MCF 10A (cell line): ENCODE measurements at regions of chr7 and their contacts with region 1.

Region 1: DNA sequence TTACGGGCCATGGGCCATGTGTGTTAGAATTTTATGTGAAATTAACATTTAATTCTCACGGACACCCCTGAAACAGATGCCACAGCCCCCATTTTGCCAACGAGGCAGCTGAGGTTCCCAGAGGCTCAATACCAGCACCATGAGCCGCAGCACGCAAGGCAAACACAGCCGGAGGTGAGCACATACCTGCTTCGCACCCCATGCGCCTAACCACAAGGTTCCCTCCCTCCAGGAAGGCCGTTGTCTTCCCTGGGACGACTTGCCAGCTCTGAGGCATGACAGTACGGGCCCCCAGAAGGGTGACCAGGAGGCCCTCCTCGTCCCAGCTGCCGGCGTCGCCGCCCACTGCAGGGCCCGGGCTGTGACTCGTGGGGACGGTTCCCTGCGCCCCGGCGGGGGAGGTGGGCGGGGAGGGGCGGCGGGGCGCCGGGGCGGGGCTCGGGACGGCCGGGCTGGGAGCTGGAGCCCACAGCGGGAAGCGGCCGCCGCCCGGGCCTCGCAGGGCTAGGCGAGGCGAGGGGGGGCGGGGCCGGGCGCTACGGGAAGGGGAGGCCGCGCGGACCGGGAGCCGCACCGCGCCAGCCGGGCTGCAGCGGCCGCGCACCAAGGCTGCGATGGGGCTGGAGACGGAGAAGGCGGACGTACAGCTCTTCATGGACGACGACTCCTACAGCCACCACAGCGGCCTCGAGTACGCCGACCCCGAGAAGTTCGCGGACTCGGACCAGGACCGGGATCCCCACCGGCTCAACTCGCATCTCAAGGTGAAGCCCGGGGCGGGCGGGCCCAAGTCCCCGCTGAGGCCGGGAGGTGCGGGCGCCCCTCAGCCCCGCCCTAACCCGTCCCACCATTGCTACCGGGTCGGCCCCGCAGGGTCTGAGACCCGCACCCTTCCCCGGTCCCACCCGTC is at the start of gene CAV2:
- DNase-seq: peak; percentile 86
- H3K4me3 Mint-ChIP-seq: peak within 1 kb of the TSS; percentile 87
- H3K27ac Mint-ChIP-seq: peak within 1 kb of the TSS; percentile 90
- H3K4me1 Mint-ChIP-seq: peaks cover 32% of the 10 kb centered on the region
- H3K27me3 Mint-ChIP-seq: no peaks in the 10 kb centered on the region
- CTCF ChIP-seq: no peak
- total RNA-seq, gene CAV2: 155 and 171 TPM in 2 replicates

Region 2: DNA sequence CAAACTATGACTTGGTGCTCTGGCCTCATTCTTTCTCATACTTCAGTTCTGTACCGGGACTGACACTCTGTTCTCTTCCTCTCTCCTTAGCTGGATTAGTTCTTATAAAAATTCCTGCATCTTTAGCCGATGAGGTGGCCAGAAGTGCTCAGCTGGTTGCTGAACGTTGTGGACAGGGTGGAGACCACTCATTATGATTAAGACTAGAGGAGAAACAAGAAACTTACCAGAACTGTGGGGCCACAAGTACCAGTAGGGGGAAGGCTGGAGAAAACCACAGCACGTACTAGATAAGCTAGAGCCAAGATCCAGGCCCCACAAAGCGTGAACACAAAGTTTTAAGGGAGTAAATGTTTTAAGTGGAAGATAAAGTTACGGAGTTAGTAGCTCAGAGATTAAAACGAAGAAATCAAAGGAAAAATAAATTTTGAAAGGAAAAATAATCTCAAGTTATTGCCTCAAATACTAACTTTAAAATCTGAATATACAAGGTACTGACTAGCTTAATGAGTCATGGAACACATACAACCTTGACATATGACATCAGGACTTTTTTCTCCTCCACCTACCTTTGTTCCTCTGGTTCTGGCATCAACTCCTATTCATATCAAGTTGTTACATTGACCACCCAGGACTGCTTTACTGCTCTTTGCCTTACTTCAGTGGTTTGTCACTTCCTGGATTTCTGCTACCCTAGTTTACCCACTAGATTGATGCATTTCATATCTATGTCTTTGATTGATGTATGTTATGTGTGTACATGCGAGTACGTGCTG is 937.9 kb before region 1 on chr7:
- CTCF ChIA-PET with region 1: no interaction called
- POLR2A ChIA-PET with region 1: no interaction called
- intact Hi-C with region 1: no loop called
- DNase-seq: no peak
- H3K4me3 Mint-ChIP-seq: no peak overlapping the region
- H3K27ac Mint-ChIP-seq: no peak overlapping the region
- H3K4me1 Mint-ChIP-seq: no peaks in the 10 kb centered on the region
- H3K27me3 Mint-ChIP-seq: peaks cover 84% of the 10 kb centered on the region
- CTCF ChIP-seq: no peak

Region 3: DNA sequence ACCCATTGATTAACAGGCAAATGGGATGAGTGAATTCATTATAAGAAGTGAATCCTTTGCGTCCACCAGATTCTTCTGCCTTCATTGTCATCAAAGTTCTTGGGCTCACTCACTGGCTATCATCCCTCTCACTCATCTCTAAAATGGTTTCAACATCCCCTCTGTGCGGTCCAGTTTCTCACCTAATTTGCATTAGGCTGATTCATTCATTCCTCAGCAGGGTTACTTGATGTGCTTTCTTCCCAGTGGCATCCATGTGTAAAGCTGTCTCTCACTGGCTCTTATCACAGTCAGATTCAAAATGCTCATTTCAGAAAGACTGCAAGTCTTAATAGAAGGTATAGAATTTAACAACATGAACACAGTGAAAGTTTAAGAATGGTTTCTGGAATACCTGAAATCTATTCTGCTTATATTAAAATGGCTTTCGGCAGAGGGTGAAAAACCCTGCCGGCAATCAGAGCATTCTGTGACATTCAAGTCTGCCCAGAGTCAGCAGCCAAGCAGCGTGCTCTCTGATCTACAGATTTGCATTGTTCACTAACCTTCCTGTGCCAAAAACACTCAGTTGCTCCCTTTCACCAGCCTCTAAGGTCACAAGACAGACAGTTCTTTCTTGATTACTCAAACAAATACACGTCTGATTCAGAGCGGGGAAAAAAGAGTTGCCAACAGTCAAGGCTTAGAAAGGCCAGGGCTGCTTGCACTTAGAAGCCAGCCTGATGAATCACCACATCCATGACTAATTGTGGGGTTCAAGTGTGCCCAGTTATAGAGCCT is 182.4 kb before region 1 on chr7:
- CTCF ChIA-PET with region 1: interaction called, 3 read pairs
- POLR2A ChIA-PET with region 1: interaction called, 11 read pairs
- intact Hi-C with region 1: loop called (anchors 1 kb)
- DNase-seq: peak; percentile 99
- H3K4me3 Mint-ChIP-seq: peak overlapping the region; percentile 42
- H3K27ac Mint-ChIP-seq: peak overlapping the region; percentile 88
- H3K4me1 Mint-ChIP-seq: peaks cover 17% of the 10 kb centered on the region
- H3K27me3 Mint-ChIP-seq: no peaks in the 10 kb centered on the region
- CTCF ChIP-seq: no peak

Region 4: GRCh38 chr7:116443101-116443523 is 56.3 kb before region 1 on chr7:
- CTCF ChIA-PET with region 1: interaction called, 4 read pairs
- POLR2A ChIA-PET with region 1: interaction called, 40 read pairs
- intact Hi-C with region 1: no loop called
- DNase-seq: peak; percentile 93
- H3K4me3 Mint-ChIP-seq: peak overlapping the region; percentile 6
- H3K27ac Mint-ChIP-seq: peak overlapping the region; percentile 93
- H3K4me1 Mint-ChIP-seq: peaks cover 38% of the 10 kb centered on the region
- H3K27me3 Mint-ChIP-seq: no peaks in the 10 kb centered on the region
- CTCF ChIP-seq: no peak

Region 5: GRCh38 chr7:116511552-116512519 is 12.4 kb after region 1 on chr7:
- CTCF ChIA-PET with region 1: interaction called, 7 read pairs
- POLR2A ChIA-PET with region 1: interaction called, 76 read pairs
- intact Hi-C with region 1: no loop called
- DNase-seq: peak; percentile 82
- H3K4me3 Mint-ChIP-seq: peak overlapping the region; percentile 76
- H3K27ac Mint-ChIP-seq: peak overlapping the region; percentile 82
- H3K4me1 Mint-ChIP-seq: peaks cover 35% of the 10 kb centered on the region
- H3K27me3 Mint-ChIP-seq: no peaks in the 10 kb centered on the region
- CTCF ChIP-seq: no peak